ENCODE measurements at regions of chr3 and their contacts with region 1.

Region 1: GRCh38 chr3:130759699-130760338 is 13.2 kb upstream of the PIK3R4 start:
- DNase-seq: no peak
- ATAC-seq: peak; percentile 91
- H3K4me3 ChIP-seq: no peak overlapping the region
- H3K27ac ChIP-seq: no peak overlapping the region
- H3K4me1 ChIP-seq: no peaks in the 10 kb centered on the region
- H3K27me3 ChIP-seq: no peaks in the 10 kb centered on the region
- CTCF ChIP-seq: peak; percentile 72 to 87 (median 74)
- EP300 ChIP-seq: no peak
- POLR2A ChIP-seq: no peak
- RAD21 ChIP-seq: peak; percentile 99

Region 2: GRCh38 chr3:130746246-130747039 is 13.4 kb before region 1 on chr3 and contains the start of gene PIK3R4:
- CTCF ChIA-PET with region 1: interaction called, 27 read pairs
- POLR2A ChIA-PET with region 1: interaction called, 4 read pairs
- RAD21 ChIA-PET with region 1: interaction called, 17 read pairs
- SMC1A ChIA-PET with region 1: interaction called, 35 read pairs
- in situ Hi-C with region 1: no loop called
- intact Hi-C with region 1: no loop called
- DNase-seq: peak; percentile 95
- ATAC-seq: peak; percentile 87
- H3K4me3 ChIP-seq: peak within 1 kb of the TSS; percentile 85
- H3K27ac ChIP-seq: peak within 1 kb of the TSS; percentile 87
- H3K4me1 ChIP-seq: peaks cover 4% of the 10 kb centered on the region; the same call in 1 of the 2 replicates
- H3K27me3 ChIP-seq: no peaks in the 10 kb centered on the region
- CTCF ChIP-seq: no peak
- EP300 ChIP-seq: no peak
- POLR2A ChIP-seq: peak; percentile 80
- RAD21 ChIP-seq: no peak
- polyA plus RNA-seq, gene PIK3R4: 22.6 to 35.8 TPM

Region 3: GRCh38 chr3:130773366-130773765 is 13.5 kb after region 1 on chr3:
- CTCF ChIA-PET with region 1: interaction called, 8 read pairs
- POLR2A ChIA-PET with region 1: no interaction called
- RAD21 ChIA-PET with region 1: no interaction called
- SMC1A ChIA-PET with region 1: interaction called, 10 read pairs
- in situ Hi-C with region 1: no loop called
- intact Hi-C with region 1: no loop called
- DNase-seq: no peak
- ATAC-seq: no peak
- H3K4me3 ChIP-seq: no peak overlapping the region
- H3K27ac ChIP-seq: no peak overlapping the region
- H3K4me1 ChIP-seq: 0 out of 2 replicates have a peak, but pooled peaks cover 1% of the 10 kb centered on the region
- H3K27me3 ChIP-seq: no peaks in the 10 kb centered on the region; a peak in 1 of 4 replicates
- CTCF ChIP-seq: no peak
- EP300 ChIP-seq: no peak
- POLR2A ChIP-seq: no peak
- RAD21 ChIP-seq: no peak

Region 4: DNA sequence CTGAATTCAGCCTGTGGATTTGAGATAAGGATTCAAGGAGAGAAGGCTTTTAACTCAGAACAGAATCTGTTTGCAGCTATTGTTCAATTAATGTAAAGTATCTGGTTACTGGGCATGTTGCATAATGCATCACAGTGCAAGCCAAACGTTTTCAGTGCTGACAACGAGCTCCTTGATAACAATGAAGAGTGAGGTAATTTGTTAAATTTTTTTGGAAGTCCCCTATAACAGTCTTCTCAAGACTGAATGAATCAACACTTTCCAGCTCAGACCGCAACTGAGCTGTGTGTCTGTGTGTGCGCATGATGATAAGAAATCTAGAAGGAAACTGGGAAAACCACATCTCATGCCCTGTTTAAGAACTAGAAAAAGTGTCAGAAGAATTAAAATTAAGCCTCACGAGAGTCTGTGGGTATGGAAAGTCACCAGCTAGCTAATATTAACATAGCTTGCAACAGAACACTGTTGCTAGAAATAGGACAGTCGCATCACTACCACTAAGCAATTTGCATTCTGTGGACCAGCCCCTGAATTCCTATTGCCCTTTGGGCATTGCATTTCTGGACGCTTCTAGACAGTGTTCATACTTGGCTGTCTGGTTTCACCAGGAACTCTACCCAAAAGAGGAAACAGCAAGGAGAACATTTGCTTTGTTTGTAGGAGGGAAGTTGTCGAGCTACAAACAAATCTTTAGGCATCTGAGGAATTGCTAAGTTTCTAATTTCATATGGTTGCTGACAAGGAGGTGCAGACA is 90.4 kb after region 1 on chr3:
- CTCF ChIA-PET with region 1: interaction called, 35 read pairs
- POLR2A ChIA-PET with region 1: interaction called, 3 read pairs
- RAD21 ChIA-PET with region 1: interaction called, 7 read pairs
- SMC1A ChIA-PET with region 1: interaction called, 25 read pairs
- in situ Hi-C with region 1: no loop called
- intact Hi-C with region 1: loop called (anchors 1 kb)
- DNase-seq: peak; percentile 95
- ATAC-seq: peak; percentile 77
- H3K4me3 ChIP-seq: peak overlapping the region; percentile 73
- H3K27ac ChIP-seq: peak overlapping the region; percentile 88
- H3K4me1 ChIP-seq: peaks cover 14% of the 10 kb centered on the region
- H3K27me3 ChIP-seq: no peaks in the 10 kb centered on the region
- CTCF ChIP-seq: no peak
- EP300 ChIP-seq: peak; percentile 96 to 99
- POLR2A ChIP-seq: peak; percentile 56; the same call in 1 of the 2 replicates
- RAD21 ChIP-seq: no peak

Region 5: GRCh38 chr3:130857326-130858026 is 97.7 kb after region 1 on chr3:
- CTCF ChIA-PET with region 1: interaction called, 35 read pairs
- POLR2A ChIA-PET with region 1: no interaction called
- RAD21 ChIA-PET with region 1: interaction called, 6 read pairs
- SMC1A ChIA-PET with region 1: interaction called, 25 read pairs
- in situ Hi-C with region 1: no loop called
- intact Hi-C with region 1: no loop called
- DNase-seq: peak; percentile 60
- ATAC-seq: peak; percentile 35
- H3K4me3 ChIP-seq: peak overlapping the region; percentile 21; the same call in 1 of the 2 replicates
- H3K27ac ChIP-seq: peak overlapping the region; percentile 63
- H3K4me1 ChIP-seq: peaks cover 4% of the 10 kb centered on the region
- H3K27me3 ChIP-seq: no peaks in the 10 kb centered on the region
- CTCF ChIP-seq: no peak
- EP300 ChIP-seq: no peak
- POLR2A ChIP-seq: no peak
- RAD21 ChIP-seq: no peak

Region 6: GRCh38 chr3:130950641-130951040 is 190.8 kb after region 1 on chr3:
- CTCF ChIA-PET with region 1: interaction called, 4 read pairs
- POLR2A ChIA-PET with region 1: no interaction called
- RAD21 ChIA-PET with region 1: no interaction called
- SMC1A ChIA-PET with region 1: interaction called, 15 read pairs
- in situ Hi-C with region 1: no loop called
- intact Hi-C with region 1: loop called (anchors 5 kb)
- DNase-seq: no peak
- ATAC-seq: no peak
- H3K4me3 ChIP-seq: no peak overlapping the region
- H3K27ac ChIP-seq: no peak overlapping the region
- H3K4me1 ChIP-seq: no peaks in the 10 kb centered on the region
- H3K27me3 ChIP-seq: no peaks in the 10 kb centered on the region
- CTCF ChIP-seq: no peak
- EP300 ChIP-seq: no peak
- POLR2A ChIP-seq: no peak
- RAD21 ChIP-seq: no peak

Region 7: DNA sequence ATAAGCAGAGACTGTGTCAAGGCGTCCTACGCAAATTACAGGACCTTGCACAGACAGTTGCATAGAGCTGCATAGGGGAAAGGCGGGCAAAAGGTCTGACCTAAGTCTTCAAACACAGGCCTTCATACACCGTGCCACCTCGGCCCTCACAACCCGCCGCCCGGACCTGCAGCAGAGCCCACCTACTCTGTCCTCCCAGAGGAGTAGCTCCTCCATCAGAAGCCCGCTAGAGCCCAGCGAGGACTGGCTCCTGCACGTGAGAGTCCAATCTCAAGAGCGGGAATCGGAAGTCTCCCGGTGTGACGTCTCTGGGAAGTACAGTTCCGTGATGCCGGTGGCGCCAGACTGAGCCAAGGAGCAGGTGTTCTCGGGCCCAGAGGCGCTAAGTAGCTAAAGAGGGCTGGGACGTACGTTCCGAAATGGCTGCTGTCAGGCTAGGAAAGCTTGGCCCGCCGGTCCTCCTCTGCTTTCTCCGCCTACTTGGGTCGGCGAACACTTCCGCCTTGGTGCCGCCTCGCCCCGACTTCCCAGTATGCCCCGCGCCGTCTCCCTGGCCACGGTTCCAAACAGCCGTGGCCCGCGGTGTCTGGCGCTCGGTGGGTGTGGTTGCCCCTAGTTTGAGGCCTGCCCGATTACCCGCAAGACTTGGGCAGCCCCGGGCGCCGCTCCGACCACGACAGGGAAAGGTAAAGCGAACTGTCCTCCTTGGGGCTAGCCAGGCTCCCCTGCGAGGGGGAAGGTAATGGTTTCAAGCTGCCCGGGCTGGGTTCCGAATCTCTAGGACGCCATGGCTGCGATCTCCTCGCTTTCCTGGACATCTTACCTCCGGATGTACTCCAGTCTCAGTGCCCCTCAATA is 266.7 kb after region 1 on chr3 and contains the starts of genes ASTE1 and NEK11:
- CTCF ChIA-PET with region 1: interaction called, 7 read pairs
- POLR2A ChIA-PET with region 1: no interaction called
- RAD21 ChIA-PET with region 1: interaction called, 4 read pairs
- SMC1A ChIA-PET with region 1: interaction called, 6 read pairs
- in situ Hi-C with region 1: no loop called
- intact Hi-C with region 1: loop called (anchors 10 kb)
- DNase-seq: peak; percentile 41
- ATAC-seq: peak; percentile 98
- H3K4me3 ChIP-seq: peak within 1 kb of the TSS; percentile 97
- H3K27ac ChIP-seq: peak within 1 kb of the TSS; percentile 92
- H3K4me1 ChIP-seq: no peaks in the 10 kb centered on the region; the same call in 1 of the 2 replicates
- H3K27me3 ChIP-seq: no peaks in the 10 kb centered on the region
- CTCF ChIP-seq: no peak
- EP300 ChIP-seq: no peak
- POLR2A ChIP-seq: peak; percentile 98
- RAD21 ChIP-seq: no peak
- polyA plus RNA-seq, gene ASTE1: 8.2 to 12.0 TPM
- polyA plus RNA-seq, gene NEK11: 0.05 to 0.10 TPM

Measured in GM12878 (cell line).